ENCODE measurements at regions of chr3 and their contacts with region 1.

Region 1: DNA sequence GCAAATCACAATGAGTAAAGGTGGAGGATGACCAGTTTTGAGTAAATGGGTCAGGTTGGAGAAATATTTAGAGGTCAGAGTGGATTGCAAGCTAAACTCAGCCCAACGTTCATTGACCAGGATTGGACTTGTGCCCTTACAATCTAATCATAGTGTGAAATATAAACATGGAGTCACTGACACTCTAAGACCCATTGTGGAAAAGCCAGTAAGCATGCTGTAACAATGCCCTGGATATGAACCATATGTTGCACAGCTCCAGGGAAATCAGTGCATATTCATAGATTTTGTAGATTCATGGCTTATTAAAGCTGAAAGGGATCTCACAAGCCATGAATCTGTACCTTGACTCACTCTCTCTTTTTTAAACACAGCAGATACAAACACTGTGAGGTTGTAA is 660.2 kb upstream of the LMCD1 start:
- DNase-seq: no peak
- H3K4me3 ChIP-seq: no peak overlapping the region
- H3K27ac ChIP-seq: no peak overlapping the region
- H3K4me1 ChIP-seq: no peaks in the 10 kb centered on the region
- H3K27me3 ChIP-seq: no peaks in the 10 kb centered on the region
- CTCF ChIP-seq: no peak
- POLR2A ChIP-seq: no peak

Region 2: GRCh38 chr3:8622873-8623691 is 781.6 kb after region 1 on chr3:
- intact Hi-C with region 1: loop called in 1 of 2 experiments (anchors 10 kb)
- DNase-seq: peak; percentile 37 to 85 (median 70)
- H3K4me3 ChIP-seq: no peak overlapping the region
- H3K27ac ChIP-seq: no peak overlapping the region
- H3K4me1 ChIP-seq: no peaks in the 10 kb centered on the region
- H3K27me3 ChIP-seq: no peaks in the 10 kb centered on the region
- CTCF ChIP-seq: peak; percentile 81 to 92 (median 86)
- POLR2A ChIP-seq: no peak